Colonic mucosa (tissue), 4 donors: ENCODE measurements at regions of chr4 and their contacts with region 1.

Region 1: GRCh38 chr4:1746265-1746691 is 25.0 kb downstream of the TACC3 start:
- DNase-seq: peak; percentile 75
- H3K4me3 ChIP-seq: no peak overlapping the region
- H3K27ac ChIP-seq: no peak overlapping the region
- H3K4me1 ChIP-seq: no peaks in the 10 kb centered on the region
- H3K27me3 ChIP-seq: no peaks in the 10 kb centered on the region
- CTCF ChIP-seq: peak; percentile 74

Region 2: GRCh38 chr4:1809754-1810511 is 63.7 kb after region 1 on chr4:
- intact Hi-C with region 1: loop called (anchors 2 kb)
- DNase-seq: peak; percentile 76
- H3K4me3 ChIP-seq: no peak overlapping the region
- H3K27ac ChIP-seq: no peak overlapping the region
- H3K4me1 ChIP-seq: no peaks in the 10 kb centered on the region
- H3K27me3 ChIP-seq: no peaks in the 10 kb centered on the region
- CTCF ChIP-seq: peak; percentile 89